ENCODE measurements at regions of chr13 and their contacts with region 1.

Region 1: GRCh38 chr13:40206241-40207000 is 460.0 kb downstream of the FOXO1 start:
- DNase-seq: peak; percentile 56 to 70 (median 65)
- H3K4me3 ChIP-seq: peak overlapping the region in 1 of 2 donors; percentile 21
- H3K4me3 Mint-ChIP-seq: peak overlapping the region; percentile 46 to 89 (median 78)
- H3K27ac ChIP-seq: peak overlapping the region; percentile 53
- H3K27ac Mint-ChIP-seq: peak overlapping the region; percentile 90 to 99 (median 98)
- H3K4me1 ChIP-seq: peaks cover 60% of the 10 kb centered on the region
- H3K4me1 Mint-ChIP-seq: peaks cover 47 to 81% (median 61%) of the 10 kb centered on the region in 4 donors
- H3K27me3 ChIP-seq: no peaks in the 10 kb centered on the region
- H3K27me3 Mint-ChIP-seq: no peaks in the 10 kb centered on the region

Region 2: GRCh38 chr13:40181203-40181845 is 25.1 kb before region 1 on chr13:
- CTCF ChIA-PET with region 1: interaction called, 6 read pairs
- POLR2A ChIA-PET with region 1: interaction called, 12 read pairs
- intact Hi-C with region 1: no loop called
- DNase-seq: no peak
- H3K4me3 ChIP-seq: no peak overlapping the region
- H3K4me3 Mint-ChIP-seq: no peak overlapping the region
- H3K27ac ChIP-seq: no peak overlapping the region
- H3K27ac Mint-ChIP-seq: peak overlapping the region in 2 of 7 donors; percentile 19 to 52
- H3K4me1 ChIP-seq: peaks cover 32% of the 10 kb centered on the region
- H3K4me1 Mint-ChIP-seq: peaks cover 29 to 67% (median 39%) of the 10 kb centered on the region in 4 donors
- H3K27me3 ChIP-seq: no peaks in the 10 kb centered on the region
- H3K27me3 Mint-ChIP-seq: no peaks in the 10 kb centered on the region

Region 3: DNA sequence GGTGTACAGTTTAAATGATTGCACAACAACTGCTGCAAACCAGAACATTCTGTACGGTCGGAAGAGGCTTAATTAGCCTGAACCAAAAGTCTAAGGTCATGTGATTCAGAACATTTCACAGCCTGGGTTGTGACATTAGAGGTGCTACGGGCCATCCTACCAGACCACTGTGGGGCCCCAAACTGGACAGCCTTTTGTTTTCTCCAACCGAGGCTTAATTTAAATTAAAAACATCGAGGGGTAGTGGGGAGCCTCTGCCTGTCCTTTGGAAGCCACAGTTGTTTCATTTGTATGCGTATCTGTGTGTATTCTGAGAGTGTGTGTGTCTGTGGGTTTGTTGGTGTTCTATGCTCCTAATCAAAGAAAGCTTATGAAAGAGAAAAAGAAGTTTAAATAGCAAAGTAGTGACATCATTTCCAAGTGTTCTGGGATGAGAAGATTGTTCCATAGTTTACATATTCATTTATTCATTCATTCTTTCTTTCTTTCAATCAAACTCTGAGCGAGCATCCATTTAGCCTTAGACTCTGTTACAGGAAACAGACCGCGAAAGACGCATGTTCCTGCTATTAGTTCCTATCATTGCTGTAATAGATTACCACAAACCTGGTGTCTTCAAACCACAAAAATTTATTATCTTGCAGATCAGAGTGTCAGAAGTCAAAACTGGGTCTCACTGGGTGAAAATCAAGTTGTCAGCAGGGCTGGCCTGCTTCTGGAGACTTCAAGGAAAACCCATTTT is 15.2 kb after region 1 on chr13:
- CTCF ChIA-PET with region 1: interaction called, 15 read pairs
- POLR2A ChIA-PET with region 1: interaction called, 37 read pairs
- intact Hi-C with region 1: no loop called
- DNase-seq: peak; percentile 82 to 89 (median 85)
- H3K4me3 ChIP-seq: no peak overlapping the region
- H3K4me3 Mint-ChIP-seq: peak overlapping the region; percentile 51 to 86 (median 76)
- H3K27ac ChIP-seq: peak overlapping the region; percentile 54
- H3K27ac Mint-ChIP-seq: peak overlapping the region; percentile 90 to 99 (median 97)
- H3K4me1 ChIP-seq: peaks cover 44% of the 10 kb centered on the region
- H3K4me1 Mint-ChIP-seq: peaks cover 40 to 59% (median 52%) of the 10 kb centered on the region in 4 donors
- H3K27me3 ChIP-seq: no peaks in the 10 kb centered on the region
- H3K27me3 Mint-ChIP-seq: no peaks in the 10 kb centered on the region

Region 4: GRCh38 chr13:40624383-40624782 is 418.0 kb after region 1 on chr13:
- CTCF ChIA-PET with region 1: no interaction called
- POLR2A ChIA-PET with region 1: no interaction called
- intact Hi-C with region 1: no loop called
- DNase-seq: peak in 1 of 5 donors; percentile 59
- H3K4me3 ChIP-seq: no peak overlapping the region
- H3K4me3 Mint-ChIP-seq: peak overlapping the region in 6 of 8 donors; percentile 21 to 87 (median 58)
- H3K27ac ChIP-seq: no peak overlapping the region
- H3K27ac Mint-ChIP-seq: peak overlapping the region in 5 of 7 donors; percentile 8 to 80 (median 65)
- H3K4me1 ChIP-seq: peaks cover 91% of the 10 kb centered on the region
- H3K4me1 Mint-ChIP-seq: peaks cover 62 to 95% (median 78%) of the 10 kb centered on the region in 4 donors
- H3K27me3 ChIP-seq: no peaks in the 10 kb centered on the region
- H3K27me3 Mint-ChIP-seq: no peaks in the 10 kb centered on the region